Activated naive CD4-positive, alpha-beta T cell treated with anti-CD3 and anti-CD28 coated beads for 36 hours (primary cell): ENCODE measurements at regions of chr9 and their contacts with region 1.

Region 1: GRCh38 chr9:69971643-69972449 is 71.8 kb upstream of the MAMDC2 start:
- DNase-seq: peak; percentile 76
- H3K4me3 Mint-ChIP-seq: no peak overlapping the region
- H3K27ac Mint-ChIP-seq: no peak overlapping the region
- H3K4me1 Mint-ChIP-seq: no peaks in the 10 kb centered on the region
- H3K27me3 Mint-ChIP-seq: peaks cover 11% of the 10 kb centered on the region

Region 2: DNA sequence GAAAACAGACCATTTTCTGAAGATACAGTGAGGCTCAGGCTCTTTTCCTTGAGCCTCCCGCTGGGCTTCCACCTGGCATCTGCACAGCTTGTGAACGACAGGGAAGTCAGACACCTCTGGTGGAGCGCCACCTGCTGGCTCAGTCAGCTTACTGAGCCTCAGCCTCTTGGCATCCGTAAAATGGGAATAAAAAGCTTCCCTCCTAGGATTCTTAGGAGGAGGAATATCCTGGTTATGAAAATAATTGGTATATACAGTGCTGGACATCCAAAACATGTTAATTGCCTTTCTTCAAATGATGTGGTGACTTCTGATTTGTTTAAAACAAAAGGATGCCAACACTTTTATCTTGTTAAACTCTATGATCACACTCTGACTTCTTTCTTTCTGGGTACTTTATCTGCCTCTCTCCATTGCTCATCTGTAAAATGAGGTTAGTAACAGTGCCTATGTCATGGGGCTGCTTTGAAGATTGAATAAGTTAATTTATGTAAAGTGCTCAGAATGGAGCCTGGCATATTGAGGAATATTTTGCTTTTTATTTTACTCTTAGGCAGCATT is 139.3 kb after region 1 on chr9:
- CTCF ChIA-PET with region 1: interaction called, 78 read pairs
- intact Hi-C with region 1: loop called (anchors 1 kb)
- DNase-seq: peak; percentile 76
- H3K4me3 Mint-ChIP-seq: peak overlapping the region; percentile 22
- H3K27ac Mint-ChIP-seq: no peak overlapping the region
- H3K4me1 Mint-ChIP-seq: peaks cover 9% of the 10 kb centered on the region
- H3K27me3 Mint-ChIP-seq: peaks cover 3% of the 10 kb centered on the region

Region 3: DNA sequence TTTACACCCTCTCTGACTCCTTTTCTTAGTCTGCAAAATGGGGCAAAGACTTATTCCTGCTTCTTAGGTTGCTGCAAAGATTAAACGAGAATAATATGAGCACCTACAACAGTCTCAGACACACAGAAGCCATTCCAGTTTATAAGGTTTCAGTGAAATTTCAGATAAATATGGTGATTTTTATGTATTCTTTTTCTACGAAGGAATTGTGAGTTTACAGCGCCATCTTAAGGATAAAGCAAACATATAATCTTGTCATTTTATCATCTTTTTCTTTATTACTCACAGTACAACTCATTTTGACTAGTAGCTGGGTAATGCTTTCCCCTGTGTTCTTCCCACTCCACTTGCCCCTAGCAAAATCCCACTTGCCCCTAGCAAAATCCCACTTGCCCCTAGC is 257.7 kb after region 1 on chr9:
- CTCF ChIA-PET with region 1: interaction called, 3 read pairs
- intact Hi-C with region 1: loop called (anchors 5 kb)
- DNase-seq: no peak
- H3K4me3 Mint-ChIP-seq: no peak overlapping the region
- H3K27ac Mint-ChIP-seq: no peak overlapping the region
- H3K4me1 Mint-ChIP-seq: no peaks in the 10 kb centered on the region
- H3K27me3 Mint-ChIP-seq: no peaks in the 10 kb centered on the region

Region 4: DNA sequence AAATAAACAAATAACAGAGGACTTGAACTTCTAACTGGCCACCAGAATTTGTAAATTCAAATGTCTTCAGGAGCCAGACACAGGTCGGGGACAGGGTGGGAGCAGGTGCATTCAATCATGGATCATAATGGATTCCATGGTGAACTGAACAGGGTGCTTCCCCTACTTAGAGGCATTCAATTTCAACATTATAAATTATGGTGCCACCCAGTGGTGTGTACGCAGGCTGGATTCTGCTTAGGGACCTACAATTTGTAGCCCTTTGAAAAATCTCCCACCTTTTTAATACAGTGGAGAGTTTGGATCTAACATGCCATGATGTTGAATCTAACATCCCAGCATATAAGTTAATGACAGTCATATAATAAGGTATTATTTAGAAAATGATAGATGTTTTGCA is 420.3 kb after region 1 on chr9:
- CTCF ChIA-PET with region 1: no interaction called
- intact Hi-C with region 1: loop called (anchors 5 kb)
- DNase-seq: peak; percentile 24
- H3K4me3 Mint-ChIP-seq: no peak overlapping the region
- H3K27ac Mint-ChIP-seq: peak overlapping the region; percentile 32
- H3K4me1 Mint-ChIP-seq: peaks cover 78% of the 10 kb centered on the region
- H3K27me3 Mint-ChIP-seq: no peaks in the 10 kb centered on the region

Region 5: GRCh38 chr9:70494221-70494620 is 522.4 kb after region 1 on chr9:
- CTCF ChIA-PET with region 1: no interaction called
- intact Hi-C with region 1: loop called (anchors 5 kb)
- DNase-seq: no peak
- H3K4me3 Mint-ChIP-seq: no peak overlapping the region
- H3K27ac Mint-ChIP-seq: peak overlapping the region; percentile 6
- H3K4me1 Mint-ChIP-seq: peaks cover 17% of the 10 kb centered on the region
- H3K27me3 Mint-ChIP-seq: peaks cover 4% of the 10 kb centered on the region